Aorta (tissue), 5 donors: ENCODE measurements at regions of chr15 and their contacts with region 1.

Region 1: GRCh38 chr15:29774900-29775299 is 47.4 kb downstream of the TJP1 start:
- DNase-seq: no peak
- ATAC-seq: no peak
- H3K4me3 ChIP-seq: no peak overlapping the region
- H3K27ac ChIP-seq: no peak overlapping the region
- H3K4me1 ChIP-seq: peaks cover 2 to 10% of the 10 kb centered on the region in 2 donors
- H3K27me3 ChIP-seq: no peaks in the 10 kb centered on the region

Region 2: GRCh38 chr15:29724026-29724425 is 50.9 kb before region 1 on chr15:
- intact Hi-C with region 1: no loop called
- DNase-seq: no peak
- ATAC-seq: no peak
- H3K4me3 ChIP-seq: no peak overlapping the region
- H3K27ac ChIP-seq: no peak overlapping the region
- H3K4me1 ChIP-seq: no peaks in the 10 kb centered on the region
- H3K27me3 ChIP-seq: no peaks in the 10 kb centered on the region

Region 3: GRCh38 chr15:29815000-29815710 is 40.3 kb after region 1 on chr15:
- intact Hi-C with region 1: loop called in 1 of 2 experiments (anchors 5 kb)
- DNase-seq: no peak
- ATAC-seq: no peak
- H3K4me3 ChIP-seq: no peak overlapping the region
- H3K27ac ChIP-seq: no peak overlapping the region
- H3K4me1 ChIP-seq: peaks cover 3 to 7% of the 10 kb centered on the region in 2 donors
- H3K27me3 ChIP-seq: no peaks in the 10 kb centered on the region